ENCODE measurements at regions of chr20 and their contacts with region 1.

Region 1: GRCh38 chr20:33299111-33299603 is 16.1 kb downstream of the BPIFB1 start:
- DNase-seq: peak; percentile 56 to 88
- ATAC-seq: no peak
- H3K4me3 ChIP-seq: no peak overlapping the region
- H3K27ac ChIP-seq: no peak overlapping the region
- H3K4me1 ChIP-seq: no peaks in the 10 kb centered on the region
- H3K27me3 ChIP-seq: peaks cover 0 to 5% of the 10 kb centered on the region in 2 donors

Region 2: DNA sequence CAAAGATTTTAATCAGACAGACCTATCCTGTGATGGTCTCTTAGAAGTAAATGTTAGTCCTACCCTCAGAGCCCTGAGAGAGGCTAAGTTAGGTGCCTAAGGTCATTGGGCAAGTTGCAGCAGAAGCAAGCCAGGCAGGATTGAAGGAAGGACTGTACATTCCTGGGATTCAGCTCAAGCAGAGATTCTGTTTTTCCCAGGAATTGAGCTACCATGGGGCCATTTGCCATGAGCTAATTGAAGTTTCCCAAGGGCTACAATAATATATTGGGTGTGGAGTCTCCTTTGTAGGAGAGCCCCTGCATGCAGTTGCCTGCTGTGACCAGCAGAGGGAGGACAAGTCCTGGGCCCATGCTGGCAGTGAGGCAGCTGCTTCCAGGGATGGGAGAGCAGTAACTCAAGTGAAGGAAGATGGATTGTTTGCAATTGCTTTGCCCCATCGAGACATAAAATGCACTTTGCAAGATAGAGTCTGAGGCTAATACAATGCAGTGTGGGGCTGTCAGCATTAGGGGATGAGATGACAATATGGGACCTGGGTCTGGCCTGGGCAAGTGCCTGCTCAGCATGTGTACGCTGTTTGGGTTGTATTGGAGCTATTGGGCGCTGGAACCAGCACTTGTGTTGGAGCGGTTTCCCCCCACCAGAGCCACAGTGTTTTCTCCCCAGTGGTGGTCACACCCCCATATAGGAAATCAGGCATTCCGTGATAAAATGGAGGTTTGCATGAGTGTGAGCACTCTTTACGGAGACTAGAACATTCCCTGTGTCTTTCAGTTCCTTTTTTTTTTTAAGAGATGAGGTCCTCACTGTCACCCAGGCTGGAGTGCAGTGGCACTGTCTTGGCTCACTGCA is 509.0 kb before region 1 on chr20:
- intact Hi-C with region 1: loop called in 1 of 2 experiments (anchors 10 kb)
- DNase-seq: peak; percentile 84 to 87
- ATAC-seq: peak; percentile 91
- H3K4me3 ChIP-seq: no peak overlapping the region
- H3K27ac ChIP-seq: no peak overlapping the region
- H3K4me1 ChIP-seq: no peaks in the 10 kb centered on the region
- H3K27me3 ChIP-seq: no peaks in the 10 kb centered on the region

Region 3: DNA sequence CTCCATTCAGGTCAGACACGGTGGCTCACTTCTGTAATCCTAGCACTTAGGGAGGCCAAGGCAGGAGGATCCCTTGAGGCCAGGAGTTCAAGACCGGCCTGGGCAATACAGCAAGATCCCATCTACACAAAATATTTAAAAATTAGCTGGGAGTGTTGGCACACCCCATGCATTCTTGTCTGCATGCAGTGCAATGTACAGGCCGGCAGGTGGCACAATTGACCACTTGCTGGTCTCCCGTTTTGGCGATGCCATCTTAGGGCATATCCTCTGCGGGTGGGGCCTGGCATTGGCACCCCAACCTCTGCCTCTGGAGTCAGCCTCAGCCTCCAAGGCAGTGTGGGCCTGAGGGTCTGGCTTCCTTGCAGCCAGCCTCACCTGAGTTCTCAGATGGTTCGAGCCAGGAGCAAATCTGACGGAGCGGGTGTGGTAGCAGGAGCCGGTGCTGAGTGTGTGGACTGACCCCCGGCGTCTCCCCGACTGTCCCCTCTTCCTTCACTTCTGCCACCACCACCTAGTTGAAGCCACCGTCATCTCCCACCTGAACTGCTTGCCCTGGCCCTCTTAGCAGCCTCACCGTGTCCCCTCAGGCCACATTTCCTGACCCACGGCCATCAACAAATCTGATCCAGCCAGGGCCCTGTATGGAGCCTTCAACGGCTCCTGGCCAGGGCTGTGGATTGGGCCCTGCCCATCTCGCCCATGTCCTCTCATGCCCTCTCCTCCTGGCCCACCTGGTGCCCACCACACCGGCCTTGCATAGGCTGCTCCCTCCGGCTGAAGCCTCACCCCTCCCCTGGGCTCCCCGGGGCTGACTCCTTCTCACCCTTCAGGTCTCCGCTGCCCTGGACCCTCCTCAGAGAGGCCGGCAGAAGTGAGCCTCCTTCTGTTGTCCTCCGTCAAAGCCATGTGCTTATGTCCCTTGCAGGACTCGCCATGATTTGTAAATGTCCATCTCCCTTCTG is 396.4 kb before region 1 on chr20:
- intact Hi-C with region 1: loop called (anchors 2 to 10 kb)
- DNase-seq: peak; percentile 68 to 81
- ATAC-seq: peak; percentile 65
- H3K4me3 ChIP-seq: no peak overlapping the region
- H3K27ac ChIP-seq: no peak overlapping the region
- H3K4me1 ChIP-seq: no peaks in the 10 kb centered on the region
- H3K27me3 ChIP-seq: no peaks in the 10 kb centered on the region

Measured in aorta (tissue), 5 donors.